GM12878 (cell line): ENCODE measurements at regions of chr19 and their contacts with region 1.

Region 1: DNA sequence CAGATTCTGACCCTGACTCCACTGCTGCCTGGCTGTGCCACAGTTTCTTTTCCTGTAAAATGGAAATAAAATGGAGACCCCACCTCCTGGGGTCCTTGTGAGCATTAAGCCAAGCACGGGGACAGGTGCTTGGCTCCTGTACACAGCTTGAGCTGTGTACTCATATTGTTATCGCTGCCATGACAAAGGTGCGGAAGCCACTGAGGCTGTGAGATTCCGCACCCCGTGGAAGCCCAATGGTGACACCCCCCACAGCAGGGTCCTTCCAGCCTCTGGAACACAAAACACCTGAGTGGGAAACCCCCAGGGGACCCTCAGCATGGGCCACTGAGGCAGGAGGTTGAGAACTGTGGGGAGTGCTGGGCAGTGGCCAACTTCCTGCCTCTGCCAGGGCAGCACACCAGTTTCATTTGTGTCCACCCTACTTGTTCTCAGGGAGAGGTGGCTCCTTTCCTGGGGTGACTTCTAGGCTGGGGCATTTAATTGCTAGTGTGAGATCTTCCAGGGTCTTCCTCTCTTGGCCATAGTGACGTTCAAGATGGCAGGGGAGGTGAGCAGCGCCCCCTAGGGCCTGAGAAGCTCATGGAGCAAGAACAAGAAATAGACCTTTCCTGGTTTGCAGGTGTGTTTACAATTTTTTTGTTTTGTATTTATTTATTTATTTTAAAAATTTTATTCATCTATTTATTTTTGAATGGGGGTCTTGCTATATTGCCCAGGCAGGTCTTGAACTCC is 5.4 kb upstream of the JSRP1 start:
- DNase-seq: no peak
- ATAC-seq: peak; percentile 17; the same call in 1 of the 3 replicates
- H3K4me3 ChIP-seq: no peak overlapping the region
- H3K27ac ChIP-seq: no peak overlapping the region
- H3K4me1 ChIP-seq: peaks cover 25% of the 10 kb centered on the region
- H3K27me3 ChIP-seq: no peaks in the 10 kb centered on the region
- CTCF ChIP-seq: peak; percentile 56 to 77 (median 76)
- EP300 ChIP-seq: no peak
- POLR2A ChIP-seq: no peak
- RAD21 ChIP-seq: peak; percentile 50

Region 2: DNA sequence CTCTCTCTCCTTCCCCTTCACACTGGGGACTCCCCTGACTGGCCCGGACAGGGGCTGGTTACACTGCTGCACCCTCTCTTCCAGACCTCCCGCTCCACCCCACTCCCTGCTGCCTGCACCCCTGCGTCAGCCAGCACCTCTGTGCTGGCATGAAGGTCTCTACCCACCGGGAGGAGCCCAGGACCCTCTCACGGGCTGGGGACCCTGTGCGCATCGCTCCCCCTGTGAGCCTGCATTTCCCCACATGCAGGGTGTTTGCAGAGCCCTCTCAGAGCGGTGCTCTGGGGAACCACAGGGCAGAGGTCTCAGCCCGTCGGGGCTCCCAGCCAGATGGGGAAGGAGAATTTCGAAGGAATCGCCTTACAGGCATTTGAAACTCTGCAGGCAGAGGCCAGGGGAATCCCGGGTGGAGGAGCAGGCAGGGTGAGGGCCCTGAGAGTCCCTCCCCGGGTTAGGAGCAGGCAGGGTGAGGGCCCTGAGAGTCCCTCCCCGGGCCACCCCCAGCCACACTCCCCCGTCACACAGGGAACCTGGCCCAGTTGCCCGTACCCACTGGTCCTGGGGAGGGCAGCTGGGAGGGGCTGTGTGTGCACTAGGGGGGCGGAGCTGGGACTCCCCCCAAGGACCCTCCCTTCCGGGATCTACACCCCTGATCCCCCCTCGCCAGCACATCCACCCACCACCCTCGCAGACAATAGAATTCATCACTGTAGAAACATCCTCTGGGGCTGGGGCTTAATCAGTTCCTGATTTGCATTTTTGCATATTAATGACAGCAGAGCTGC is 592.9 kb before region 1 on chr19:
- CTCF ChIA-PET with region 1: no interaction called
- POLR2A ChIA-PET with region 1: no interaction called
- RAD21 ChIA-PET with region 1: no interaction called
- SMC1A ChIA-PET with region 1: no interaction called
- in situ Hi-C with region 1: no loop called
- intact Hi-C with region 1: no loop called
- DNase-seq: no peak
- ATAC-seq: peak; percentile 67
- H3K4me3 ChIP-seq: peak overlapping the region; percentile 69; the same call in 1 of the 2 replicates
- H3K27ac ChIP-seq: peak overlapping the region; percentile 84
- H3K4me1 ChIP-seq: peaks cover 39% of the 10 kb centered on the region
- H3K27me3 ChIP-seq: no peaks in the 10 kb centered on the region
- CTCF ChIP-seq: 0 out of 6 replicates have a peak, but pooled peaks of 1 of the 3 experiments have one; percentile 6
- EP300 ChIP-seq: no peak
- POLR2A ChIP-seq: no peak; the same call in 1 of the 2 replicates
- RAD21 ChIP-seq: no peak

Region 3: GRCh38 chr19:1848399-1849131 is 413.0 kb before region 1 on chr19 and contains the start of gene REXO1:
- CTCF ChIA-PET with region 1: no interaction called
- POLR2A ChIA-PET with region 1: no interaction called
- RAD21 ChIA-PET with region 1: no interaction called
- SMC1A ChIA-PET with region 1: no interaction called
- in situ Hi-C with region 1: no loop called
- intact Hi-C with region 1: no loop called
- DNase-seq: peak; percentile 72
- ATAC-seq: peak; percentile 81
- H3K4me3 ChIP-seq: peak within 1 kb of the TSS; percentile 89
- H3K27ac ChIP-seq: peak within 1 kb of the TSS; percentile 100
- H3K4me1 ChIP-seq: peaks cover 29% of the 10 kb centered on the region
- H3K27me3 ChIP-seq: no peaks in the 10 kb centered on the region
- CTCF ChIP-seq: peak; percentile 82 to 94 (median 84)
- EP300 ChIP-seq: no peak
- POLR2A ChIP-seq: peak; percentile 88
- RAD21 ChIP-seq: no peak
- polyA plus RNA-seq, gene REXO1: 0.03 to 0.64 TPM

Region 4: GRCh38 chr19:2289714-2290435 is 28.3 kb after region 1 on chr19:
- CTCF ChIA-PET with region 1: interaction called, 5 read pairs
- POLR2A ChIA-PET with region 1: no interaction called
- RAD21 ChIA-PET with region 1: interaction called, 3 read pairs
- SMC1A ChIA-PET with region 1: interaction called, 11 read pairs
- in situ Hi-C with region 1: no loop called
- intact Hi-C with region 1: no loop called
- DNase-seq: peak; percentile 48
- ATAC-seq: peak; percentile 72
- H3K4me3 ChIP-seq: peak overlapping the region; percentile 65
- H3K27ac ChIP-seq: peak overlapping the region; percentile 74
- H3K4me1 ChIP-seq: peaks cover 30% of the 10 kb centered on the region
- H3K27me3 ChIP-seq: no peaks in the 10 kb centered on the region
- CTCF ChIP-seq: no peak
- EP300 ChIP-seq: peak; percentile 53 to 55; a peak in 2 of 4 replicates
- POLR2A ChIP-seq: no peak; the same call in 1 of the 2 replicates
- RAD21 ChIP-seq: no peak